ENCODE measurements at regions of chr17 and their contacts with region 1.

Region 1: GRCh38 chr17:40417609-40418427 is at the start of gene TOP2A:
- DNase-seq: peak; percentile 97
- H3K4me3 Mint-ChIP-seq: peak within 1 kb of the TSS; percentile 97
- H3K27ac Mint-ChIP-seq: peak within 1 kb of the TSS; percentile 92
- H3K4me1 Mint-ChIP-seq: peaks cover 47% of the 10 kb centered on the region
- H3K27me3 Mint-ChIP-seq: peaks cover 4% of the 10 kb centered on the region
- total RNA-seq, gene TOP2A: 361 to 373 TPM

Region 2: DNA sequence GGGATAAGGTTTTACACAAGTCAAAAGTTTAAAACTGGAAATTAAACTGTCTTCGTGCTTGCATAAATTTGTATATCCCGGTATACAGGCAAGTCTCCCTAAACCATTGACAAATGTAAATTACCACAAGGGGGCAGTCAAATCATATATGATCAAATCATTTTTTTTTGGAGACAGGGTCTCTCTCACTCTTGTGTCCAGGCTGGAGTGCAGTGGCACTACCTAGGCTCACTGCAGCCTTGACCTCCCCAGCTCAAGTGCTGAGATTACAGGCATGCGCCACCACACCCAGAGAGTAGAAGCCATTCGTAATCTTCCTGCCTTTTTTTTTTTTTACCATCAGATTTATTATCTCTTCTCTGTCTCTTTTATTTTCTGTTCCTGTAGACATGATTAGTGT is 18.6 kb before region 1 on chr17:
- CTCF ChIA-PET with region 1: interaction called, 8 read pairs
- POLR2A ChIA-PET with region 1: interaction called, 12 read pairs
- DNase-seq: no peak
- H3K4me3 Mint-ChIP-seq: no peak overlapping the region
- H3K27ac Mint-ChIP-seq: no peak overlapping the region
- H3K4me1 Mint-ChIP-seq: peaks cover 25% of the 10 kb centered on the region
- H3K27me3 Mint-ChIP-seq: no peaks in the 10 kb centered on the region

Region 3: GRCh38 chr17:40443583-40444327 is 25.9 kb after region 1 on chr17:
- CTCF ChIA-PET with region 1: interaction called, 17 read pairs
- POLR2A ChIA-PET with region 1: interaction called, 34 read pairs
- DNase-seq: peak; percentile 72
- H3K4me3 Mint-ChIP-seq: peak overlapping the region; percentile 82
- H3K27ac Mint-ChIP-seq: peak overlapping the region; percentile 88
- H3K4me1 Mint-ChIP-seq: peaks cover 48% of the 10 kb centered on the region
- H3K27me3 Mint-ChIP-seq: peaks cover 31% of the 10 kb centered on the region

Region 4: GRCh38 chr17:40464392-40464855 is 46.6 kb after region 1 on chr17:
- CTCF ChIA-PET with region 1: no interaction called
- POLR2A ChIA-PET with region 1: no interaction called
- DNase-seq: no peak
- H3K4me3 Mint-ChIP-seq: no peak overlapping the region
- H3K27ac Mint-ChIP-seq: no peak overlapping the region
- H3K4me1 Mint-ChIP-seq: no peaks in the 10 kb centered on the region
- H3K27me3 Mint-ChIP-seq: peaks cover 11% of the 10 kb centered on the region

Region 5: DNA sequence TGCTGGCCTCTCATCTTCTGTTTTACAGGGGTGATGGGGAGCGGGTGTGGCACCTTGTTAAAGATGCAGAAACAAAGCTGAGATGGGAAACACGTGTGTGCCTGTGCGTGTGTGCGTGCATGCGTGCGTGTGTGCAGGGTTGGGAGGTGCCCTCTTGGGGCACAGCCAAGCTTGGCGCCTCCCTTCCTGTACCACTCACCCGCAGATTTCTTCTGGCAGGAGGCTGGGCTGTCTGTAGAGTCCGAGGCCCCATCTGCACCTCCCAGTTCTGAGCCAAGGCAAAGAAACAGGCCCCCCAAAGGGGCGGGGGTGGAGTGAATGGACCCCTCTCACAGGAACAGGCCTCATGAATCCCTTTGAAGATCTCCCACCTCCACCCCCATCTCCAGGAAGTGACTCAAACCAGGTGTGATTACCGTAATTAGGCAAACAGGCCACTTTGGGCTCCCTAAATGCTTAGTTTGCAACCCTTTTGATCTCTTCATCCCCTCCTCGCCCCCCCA is 62.7 kb after region 1 on chr17:
- CTCF ChIA-PET with region 1: interaction called, 15 read pairs
- POLR2A ChIA-PET with region 1: interaction called, 31 read pairs
- DNase-seq: peak; percentile 91
- H3K4me3 Mint-ChIP-seq: peak overlapping the region; percentile 55
- H3K27ac Mint-ChIP-seq: peak overlapping the region; percentile 89
- H3K4me1 Mint-ChIP-seq: peaks cover 90% of the 10 kb centered on the region
- H3K27me3 Mint-ChIP-seq: peaks cover 5% of the 10 kb centered on the region

Region 6: DNA sequence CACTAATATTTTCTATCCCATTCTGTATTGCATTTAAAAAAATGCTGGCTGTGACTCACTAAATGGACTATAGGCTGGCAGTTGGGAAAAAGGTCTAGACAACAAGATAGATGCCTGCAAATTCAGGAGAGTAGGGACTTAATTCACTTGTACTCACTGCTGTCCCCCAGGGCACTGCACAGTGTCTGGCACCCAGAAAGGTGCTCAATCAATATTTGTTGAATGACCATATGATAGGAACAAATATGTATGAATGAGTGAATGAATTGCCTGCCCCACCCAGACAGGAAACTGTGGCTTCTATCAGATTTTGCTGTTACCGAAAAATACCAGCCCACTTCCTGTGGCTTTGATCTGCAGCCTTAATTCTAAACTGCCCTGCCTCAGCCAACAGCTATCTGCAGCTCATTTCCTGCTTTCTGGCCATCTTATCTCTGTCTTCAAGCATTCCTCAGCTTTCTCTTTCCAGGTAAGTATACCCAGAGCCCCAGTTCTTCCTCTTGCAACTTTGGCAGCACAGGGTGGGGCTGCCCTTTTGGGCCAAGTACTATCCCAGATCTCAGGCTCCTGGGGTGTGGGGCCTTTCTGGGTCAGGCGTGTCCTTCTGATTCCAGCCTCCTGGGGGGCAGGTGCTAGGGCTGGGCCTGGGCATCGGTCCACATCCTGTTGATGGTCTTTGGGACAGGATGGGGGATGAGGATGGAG is 98.9 kb after region 1 on chr17:
- CTCF ChIA-PET with region 1: interaction called, 6 read pairs
- POLR2A ChIA-PET with region 1: interaction called, 22 read pairs
- DNase-seq: peak; percentile 87
- H3K4me3 Mint-ChIP-seq: peak overlapping the region; percentile 80
- H3K27ac Mint-ChIP-seq: peak overlapping the region; percentile 92
- H3K4me1 Mint-ChIP-seq: peaks cover 80% of the 10 kb centered on the region
- H3K27me3 Mint-ChIP-seq: peaks cover 2% of the 10 kb centered on the region

Region 7: DNA sequence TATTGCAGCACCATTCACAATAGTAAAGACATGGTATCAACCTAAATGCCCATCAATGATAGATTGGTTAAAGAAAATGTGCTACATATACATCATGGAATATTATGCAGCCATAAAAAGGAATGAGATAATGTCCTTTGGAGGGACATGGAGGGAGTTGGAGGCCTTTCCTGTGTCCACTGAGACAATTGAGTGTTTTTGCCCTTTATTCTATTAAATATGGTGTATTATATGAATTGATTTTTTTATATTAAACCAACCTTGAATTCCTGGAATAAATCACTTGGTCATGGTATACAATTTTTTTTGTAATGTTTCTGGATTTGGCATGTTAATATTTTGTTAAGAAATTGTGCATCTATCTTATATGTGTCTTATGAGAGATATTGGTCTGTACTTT is 156.5 kb after region 1 on chr17:
- CTCF ChIA-PET with region 1: no interaction called
- POLR2A ChIA-PET with region 1: no interaction called
- DNase-seq: no peak
- H3K4me3 Mint-ChIP-seq: no peak overlapping the region
- H3K27ac Mint-ChIP-seq: no peak overlapping the region
- H3K4me1 Mint-ChIP-seq: peaks cover 22% of the 10 kb centered on the region
- H3K27me3 Mint-ChIP-seq: peaks cover 35% of the 10 kb centered on the region

Measured in activated CD4-positive, alpha-beta memory T cell treated with anti-CD3 and anti-CD28 coated beads, Interleukin-2, amount 10 ng/mL, durations not matched to agents 7 days and 5 days (primary cell).